ENCODE measurements at regions of chr22 and their contacts with region 1.

Region 1: DNA sequence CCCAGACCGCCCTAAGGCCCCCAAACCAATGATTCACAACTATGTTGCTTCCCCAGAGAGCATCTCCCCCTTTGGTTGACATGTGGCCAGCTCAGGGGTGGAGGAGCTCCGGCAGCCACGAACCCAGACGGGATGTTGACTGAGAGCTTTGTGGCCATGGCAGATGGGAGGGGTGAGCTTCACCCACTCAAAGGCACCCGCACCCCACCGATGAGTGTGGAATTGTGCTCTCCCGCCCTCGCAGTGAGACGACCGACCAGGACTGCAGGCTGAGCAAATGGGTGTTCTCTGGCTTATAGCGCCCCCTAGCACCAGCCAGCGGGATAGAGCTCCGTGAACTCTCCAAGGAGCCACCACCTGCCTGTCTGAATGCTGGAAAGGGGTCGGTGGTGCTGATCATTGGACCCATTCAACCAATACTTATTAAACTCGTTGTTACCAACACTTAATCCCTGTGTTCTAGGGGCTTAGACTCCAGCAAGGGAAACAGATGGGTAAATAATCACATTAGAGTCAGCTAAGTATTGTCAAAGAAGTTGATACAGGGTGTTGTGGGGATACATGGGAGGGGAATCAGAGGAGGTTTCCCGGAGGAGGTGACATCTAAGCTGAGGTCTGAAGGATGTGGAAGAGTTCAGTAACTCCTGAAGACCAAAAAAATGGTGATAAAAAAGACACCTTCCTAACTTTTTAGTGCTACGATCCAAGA is 4.5 kb upstream of the TIMP3 start:
- DNase-seq: no peak
- H3K4me3 ChIP-seq: no peak overlapping the region
- H3K27ac ChIP-seq: peak overlapping the region; percentile 58
- H3K4me1 ChIP-seq: peaks cover 18% of the 10 kb centered on the region
- H3K27me3 ChIP-seq: no peaks in the 10 kb centered on the region
- CTCF ChIP-seq: peak; percentile 70 to 90 (median 78)
- POLR2A ChIP-seq: peak in 1 of 2 donors; percentile 20

Region 2: GRCh38 chr22:32306561-32306960 is 490.5 kb before region 1 on chr22:
- intact Hi-C with region 1: no loop called
- DNase-seq: no peak
- H3K4me3 ChIP-seq: no peak overlapping the region
- H3K27ac ChIP-seq: no peak overlapping the region
- H3K4me1 ChIP-seq: no peaks in the 10 kb centered on the region
- H3K27me3 ChIP-seq: no peaks in the 10 kb centered on the region
- CTCF ChIP-seq: no peak
- POLR2A ChIP-seq: no peak

Region 3: GRCh38 chr22:32528984-32529982 is 267.7 kb before region 1 on chr22:
- intact Hi-C with region 1: loop called (anchors 2 kb)
- DNase-seq: no peak
- H3K4me3 ChIP-seq: peak overlapping the region in 1 of 2 donors; percentile 25
- H3K27ac ChIP-seq: peak overlapping the region; percentile 64
- H3K4me1 ChIP-seq: peaks cover 55% of the 10 kb centered on the region
- H3K27me3 ChIP-seq: no peaks in the 10 kb centered on the region
- CTCF ChIP-seq: peak; percentile 94 to 98 (median 97)
- POLR2A ChIP-seq: no peak

Region 4: GRCh38 chr22:32649515-32650200 is 147.4 kb before region 1 on chr22:
- intact Hi-C with region 1: loop called (anchors 10 kb)
- DNase-seq: peak in 1 of 2 donors; percentile 98
- H3K4me3 ChIP-seq: no peak overlapping the region
- H3K27ac ChIP-seq: peak overlapping the region; percentile 87
- H3K4me1 ChIP-seq: peaks cover 21% of the 10 kb centered on the region
- H3K27me3 ChIP-seq: no peaks in the 10 kb centered on the region
- CTCF ChIP-seq: no peak
- POLR2A ChIP-seq: no peak

Region 5: DNA sequence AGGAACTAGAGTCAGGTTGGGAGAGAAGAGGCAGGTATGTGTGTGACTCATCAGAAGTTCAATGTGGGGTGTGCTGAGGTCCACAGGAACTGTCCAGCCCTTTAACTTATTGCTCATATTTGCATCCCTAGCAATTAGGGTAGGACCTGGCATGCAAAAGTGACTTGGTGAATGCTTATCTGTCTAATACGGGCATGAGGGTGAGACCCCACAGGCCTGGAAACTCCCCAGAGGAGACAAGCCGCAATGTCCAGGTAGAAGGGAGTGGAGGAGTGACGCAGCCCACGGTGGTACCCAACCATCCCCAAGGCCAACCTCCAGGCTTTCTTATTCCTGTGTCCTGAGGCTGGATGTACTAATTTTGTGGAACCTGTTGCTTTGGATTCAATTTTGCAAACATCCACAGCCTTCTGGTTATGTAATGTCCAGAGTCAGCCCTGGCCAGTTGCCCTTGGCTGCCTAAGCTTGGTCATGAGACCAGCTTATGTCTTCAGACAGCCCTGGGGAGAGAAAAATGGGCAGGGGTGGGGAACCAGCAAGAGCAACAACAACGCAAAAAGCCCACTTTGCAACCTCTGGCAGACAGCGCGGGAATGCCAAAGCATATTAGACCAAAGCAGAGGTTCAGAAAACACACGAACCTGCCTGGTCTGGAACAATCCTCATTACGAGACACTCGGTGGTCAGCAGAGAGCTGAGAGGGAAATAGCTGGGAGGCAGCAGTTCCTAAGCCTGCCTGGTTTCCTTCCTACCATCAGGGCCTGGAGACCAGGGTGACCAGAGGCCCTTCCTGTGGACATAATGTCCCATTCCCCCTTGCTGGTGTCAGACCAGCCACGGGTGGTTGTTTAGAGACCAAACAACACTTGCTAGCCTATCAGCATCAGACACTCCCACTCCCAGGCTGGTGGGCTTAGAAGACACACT is 53.8 kb after region 1 on chr22:
- intact Hi-C with region 1: loop called (anchors 5 kb)
- DNase-seq: no peak
- H3K4me3 ChIP-seq: no peak overlapping the region
- H3K27ac ChIP-seq: peak overlapping the region; percentile 94
- H3K4me1 ChIP-seq: peaks cover 79% of the 10 kb centered on the region
- H3K27me3 ChIP-seq: no peaks in the 10 kb centered on the region
- CTCF ChIP-seq: no peak
- POLR2A ChIP-seq: no peak

Region 6: GRCh38 chr22:32991353-32992121 is 194.5 kb after region 1 on chr22:
- intact Hi-C with region 1: loop called (anchors 10 kb)
- DNase-seq: peak in 1 of 2 donors; percentile 87
- H3K4me3 ChIP-seq: no peak overlapping the region
- H3K27ac ChIP-seq: peak overlapping the region; percentile 14
- H3K4me1 ChIP-seq: peaks cover 44% of the 10 kb centered on the region
- H3K27me3 ChIP-seq: no peaks in the 10 kb centered on the region
- CTCF ChIP-seq: no peak
- POLR2A ChIP-seq: no peak

Measured in vagina (tissue), 2 donors.